ENCODE measurements at regions of chr5 and their contacts with region 1.

Region 1: DNA sequence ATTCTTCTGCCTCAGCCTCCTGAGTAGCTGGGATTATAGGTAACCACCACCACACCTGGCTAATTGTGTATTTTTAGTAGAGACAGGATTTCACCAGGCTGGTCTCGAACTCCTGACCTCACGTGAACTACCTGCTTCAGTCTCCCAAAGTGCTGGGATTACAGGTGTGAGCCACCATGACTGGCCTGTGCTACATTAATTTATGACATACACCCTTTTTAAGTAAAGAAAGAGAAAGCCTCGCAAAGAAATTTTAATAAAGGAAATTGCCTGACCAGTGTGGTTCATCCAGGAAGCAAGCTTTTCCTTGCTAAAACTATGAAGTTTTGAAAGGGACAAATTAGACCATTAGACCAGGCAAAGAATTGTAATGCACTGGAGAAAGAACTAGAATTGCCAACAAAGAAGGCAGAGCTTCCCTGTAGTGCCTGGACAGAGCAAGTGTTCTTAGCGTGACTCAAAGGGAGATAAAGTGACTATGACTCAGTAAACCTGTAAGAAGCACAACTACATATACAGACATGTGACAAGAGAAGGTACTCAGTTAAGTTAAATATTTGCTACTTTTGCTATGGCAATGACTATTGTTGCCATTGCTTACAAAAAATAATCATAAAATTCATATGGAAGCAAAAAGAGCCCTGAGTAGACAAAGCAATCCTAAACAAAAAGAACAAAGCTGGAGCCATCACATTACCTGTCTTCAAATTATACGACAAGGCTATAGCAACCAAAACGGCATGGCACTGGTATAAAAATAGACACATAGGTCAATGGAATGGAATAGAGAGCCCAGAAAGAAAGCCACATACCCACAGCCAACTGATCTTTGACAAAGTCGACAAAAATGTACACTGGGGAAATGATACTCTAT is 54.6 kb downstream of the FYB1 start:
- DNase-seq: no peak
- H3K4me3 Mint-ChIP-seq: peak overlapping the region; percentile 61
- H3K27ac Mint-ChIP-seq: peak overlapping the region; percentile 89
- H3K4me1 Mint-ChIP-seq: peaks cover 66% of the 10 kb centered on the region
- H3K27me3 Mint-ChIP-seq: no peaks in the 10 kb centered on the region

Region 2: DNA sequence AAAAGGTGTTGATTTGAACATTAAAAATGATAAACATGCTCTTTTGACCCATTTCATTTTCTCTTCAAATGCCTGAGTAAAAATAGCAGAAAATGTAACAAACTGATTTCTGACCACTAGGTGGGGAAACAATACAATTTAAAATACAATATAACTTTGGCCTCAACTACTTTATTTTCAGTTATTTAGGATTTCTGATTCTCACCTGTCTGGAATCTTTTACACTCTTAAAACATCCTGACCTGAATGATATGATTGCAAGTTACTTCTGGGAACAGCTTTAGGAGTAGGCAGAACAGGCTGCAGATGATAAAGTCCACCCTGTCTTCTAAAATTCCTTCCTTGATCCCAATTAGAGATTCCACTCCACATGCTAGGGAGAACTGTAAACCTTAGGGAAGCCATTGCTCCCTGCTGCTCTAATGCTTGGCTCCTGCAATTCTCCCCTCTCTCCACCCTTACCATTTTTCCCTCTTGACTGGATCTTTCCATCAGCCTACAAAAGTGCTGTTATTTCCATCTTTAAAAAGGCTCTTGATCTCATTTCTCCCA is 15.7 kb before region 1 on chr5:
- intact Hi-C with region 1: loop called (anchors 2 kb)
- DNase-seq: no peak
- H3K4me3 Mint-ChIP-seq: no peak overlapping the region
- H3K27ac Mint-ChIP-seq: peak overlapping the region; percentile 52
- H3K4me1 Mint-ChIP-seq: peaks cover 42% of the 10 kb centered on the region
- H3K27me3 Mint-ChIP-seq: no peaks in the 10 kb centered on the region

Region 3: GRCh38 chr5:39177631-39177964 is 12.8 kb after region 1 on chr5:
- intact Hi-C with region 1: loop called (anchors 1 kb)
- DNase-seq: no peak
- H3K4me3 Mint-ChIP-seq: peak overlapping the region; percentile 69
- H3K27ac Mint-ChIP-seq: peak overlapping the region; percentile 84
- H3K4me1 Mint-ChIP-seq: peaks cover 85% of the 10 kb centered on the region
- H3K27me3 Mint-ChIP-seq: no peaks in the 10 kb centered on the region

Region 4: DNA sequence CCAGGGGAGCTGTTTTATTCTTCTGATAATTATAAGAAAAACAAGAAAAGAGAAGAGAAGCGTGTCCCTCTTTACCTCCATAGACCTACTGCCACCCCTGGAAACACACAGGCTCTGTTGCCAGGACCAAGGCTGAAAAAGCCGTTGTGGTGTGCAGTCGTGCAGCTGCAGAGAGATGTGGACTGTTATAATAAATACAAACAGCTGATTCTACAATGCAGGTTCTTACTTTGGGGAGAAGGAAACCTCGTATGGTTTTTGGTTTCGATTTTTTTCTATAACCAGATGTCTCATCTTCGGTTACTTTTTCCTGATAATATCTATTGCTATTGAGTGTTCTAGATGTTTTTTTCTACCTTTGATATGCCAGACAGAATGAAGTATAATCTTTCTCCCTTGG is 26.4 kb after region 1 on chr5:
- intact Hi-C with region 1: loop called (anchors 1 kb)
- DNase-seq: no peak
- H3K4me3 Mint-ChIP-seq: peak overlapping the region; percentile 47
- H3K27ac Mint-ChIP-seq: peak overlapping the region; percentile 72
- H3K4me1 Mint-ChIP-seq: peaks cover 86% of the 10 kb centered on the region
- H3K27me3 Mint-ChIP-seq: no peaks in the 10 kb centered on the region

Region 5: GRCh38 chr5:39202597-39203274 is 38.0 kb after region 1 on chr5:
- intact Hi-C with region 1: loop called (anchors 5 kb)
- DNase-seq: no peak
- H3K4me3 Mint-ChIP-seq: peak overlapping the region; percentile 89
- H3K27ac Mint-ChIP-seq: peak overlapping the region; percentile 90
- H3K4me1 Mint-ChIP-seq: peaks cover 62% of the 10 kb centered on the region
- H3K27me3 Mint-ChIP-seq: no peaks in the 10 kb centered on the region

Region 6: GRCh38 chr5:39209924-39210323 is 45.2 kb after region 1 on chr5:
- intact Hi-C with region 1: loop called (anchors 2 kb)
- DNase-seq: peak; percentile 82
- H3K4me3 Mint-ChIP-seq: peak overlapping the region; percentile 73
- H3K27ac Mint-ChIP-seq: peak overlapping the region; percentile 90
- H3K4me1 Mint-ChIP-seq: peaks cover 87% of the 10 kb centered on the region
- H3K27me3 Mint-ChIP-seq: no peaks in the 10 kb centered on the region

Region 7: GRCh38 chr5:39231705-39232525 is 67.1 kb after region 1 on chr5:
- intact Hi-C with region 1: no loop called
- DNase-seq: no peak
- H3K4me3 Mint-ChIP-seq: no peak overlapping the region
- H3K27ac Mint-ChIP-seq: peak overlapping the region; percentile 82
- H3K4me1 Mint-ChIP-seq: peaks cover 13% of the 10 kb centered on the region
- H3K27me3 Mint-ChIP-seq: no peaks in the 10 kb centered on the region

Region 8: GRCh38 chr5:39340506-39340905 is 175.7 kb after region 1 on chr5:
- intact Hi-C with region 1: no loop called
- DNase-seq: no peak
- H3K4me3 Mint-ChIP-seq: no peak overlapping the region
- H3K27ac Mint-ChIP-seq: no peak overlapping the region
- H3K4me1 Mint-ChIP-seq: no peaks in the 10 kb centered on the region
- H3K27me3 Mint-ChIP-seq: peaks cover 3% of the 10 kb centered on the region

Region 9: GRCh38 chr5:39547553-39548154 is 382.9 kb after region 1 on chr5:
- intact Hi-C with region 1: no loop called
- DNase-seq: no peak
- H3K4me3 Mint-ChIP-seq: no peak overlapping the region
- H3K27ac Mint-ChIP-seq: no peak overlapping the region
- H3K4me1 Mint-ChIP-seq: peaks cover 4% of the 10 kb centered on the region
- H3K27me3 Mint-ChIP-seq: peaks cover 2% of the 10 kb centered on the region

Region 10: GRCh38 chr5:40652441-40653220 is 1487.9 kb after region 1 on chr5:
- intact Hi-C with region 1: loop called (anchors 5 kb)
- DNase-seq: no peak
- H3K4me3 Mint-ChIP-seq: peak overlapping the region; percentile 83
- H3K27ac Mint-ChIP-seq: peak overlapping the region; percentile 72
- H3K4me1 Mint-ChIP-seq: peaks cover 75% of the 10 kb centered on the region
- H3K27me3 Mint-ChIP-seq: no peaks in the 10 kb centered on the region

Measured in activated T-helper 2 cell treated with anti-CD3 and anti-CD28 coated beads, Interferon-gamma antibody, Interleukin-2, Interleukin-4, amounts not matched to agents 10 μg/mL and 5 μg/mL and 100 μg/mL, durations not matched to agents 14 hours and 24 hours and 36 hours (primary cell).